Psoas muscle (tissue), 8 donors: ENCODE measurements at regions of chr12 and their contacts with region 1.

Region 1: DNA sequence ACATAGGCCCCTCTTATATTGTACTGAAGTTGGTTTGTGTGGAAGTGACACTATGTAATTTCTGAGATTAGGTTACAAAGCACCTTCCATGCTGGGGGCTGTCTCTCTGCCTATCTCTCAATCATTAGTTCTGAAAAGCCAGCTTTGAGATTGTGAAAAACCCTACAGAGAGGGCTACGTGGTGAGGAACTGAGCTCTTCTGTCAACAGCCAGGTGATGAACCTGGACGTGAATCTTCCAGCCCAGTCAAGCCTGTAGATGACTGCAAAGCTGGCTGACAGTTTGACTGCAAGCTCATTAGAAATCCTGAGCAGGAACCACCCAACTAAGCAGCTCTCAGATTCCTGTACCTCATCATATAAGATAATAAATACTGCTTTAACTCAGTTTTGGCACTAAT is 36.3 kb upstream of the BBS10 start:
- DNase-seq: no peak
- ATAC-seq: peak in 3 of 4 donors; percentile 51 to 63 (median 59)
- H3K4me3 ChIP-seq: no peak overlapping the region
- H3K27ac ChIP-seq: peak overlapping the region; percentile 43
- H3K4me1 ChIP-seq: peaks cover 11% of the 10 kb centered on the region
- H3K27me3 ChIP-seq: no peaks in the 10 kb centered on the region
- CTCF ChIP-seq: no peak

Region 2: DNA sequence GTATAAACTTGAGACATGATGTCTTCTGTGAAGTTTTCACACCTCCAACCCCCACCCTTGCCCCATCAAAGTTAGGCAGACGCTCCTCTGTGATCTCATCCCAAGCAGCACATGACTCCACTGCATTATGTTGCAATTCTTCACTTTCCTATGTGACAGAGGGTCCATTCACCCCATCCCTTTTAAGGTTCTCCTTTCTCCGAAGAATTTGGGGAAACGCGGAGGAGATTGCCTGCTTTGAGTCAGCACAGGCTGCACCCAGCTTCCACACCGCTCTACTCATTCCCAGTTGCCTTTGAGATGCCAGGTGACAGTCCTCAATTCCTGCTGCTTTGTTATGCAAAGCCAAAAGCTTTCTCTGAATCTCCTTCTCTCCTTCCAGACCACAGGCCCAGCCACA is 414.8 kb before region 1 on chr12:
- intact Hi-C with region 1: no loop called
- DNase-seq: no peak
- ATAC-seq: peak in 1 of 4 donors; percentile 37
- H3K4me3 ChIP-seq: no peak overlapping the region
- H3K27ac ChIP-seq: no peak overlapping the region
- H3K4me1 ChIP-seq: no peaks in the 10 kb centered on the region
- H3K27me3 ChIP-seq: no peaks in the 10 kb centered on the region
- CTCF ChIP-seq: no peak

Region 3: DNA sequence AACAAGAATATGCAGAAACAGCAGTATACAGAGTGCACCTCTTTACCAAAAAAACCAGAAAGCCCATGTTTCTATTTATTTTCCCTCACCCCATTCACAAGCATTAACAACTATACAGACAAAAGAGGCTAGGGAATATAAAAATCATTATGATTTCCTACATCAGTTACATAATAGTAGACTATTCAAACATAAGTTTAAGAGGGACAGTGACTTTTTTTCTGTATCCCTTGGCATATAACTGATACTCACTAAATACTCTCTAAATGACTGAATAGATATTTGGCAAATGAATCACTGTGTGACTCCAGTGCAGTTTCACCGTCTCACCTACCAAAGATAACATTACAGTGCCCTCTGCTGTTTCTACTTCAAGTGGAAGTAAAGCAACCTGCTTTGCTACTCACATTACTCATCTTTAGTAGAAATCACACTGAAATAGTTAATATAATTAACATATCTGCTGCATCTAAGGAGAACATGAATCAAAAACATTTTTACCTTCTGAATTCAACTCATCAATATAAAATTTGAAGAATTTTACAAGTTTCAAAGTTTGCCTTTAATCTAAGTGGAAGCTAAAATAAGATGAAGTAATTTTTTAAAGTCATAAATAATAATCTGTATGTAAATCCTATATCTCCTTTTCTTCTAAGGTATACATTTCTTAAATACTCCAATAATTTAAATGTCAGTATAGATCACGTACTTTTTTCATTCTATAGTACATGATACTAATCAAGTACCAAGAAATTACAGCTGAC is 71.2 kb after region 1 on chr12:
- intact Hi-C with region 1: no loop called
- DNase-seq: no peak
- ATAC-seq: peak; percentile 77 to 94 (median 90)
- H3K4me3 ChIP-seq: no peak overlapping the region
- H3K27ac ChIP-seq: peak overlapping the region; percentile 0
- H3K4me1 ChIP-seq: peaks cover 17% of the 10 kb centered on the region
- H3K27me3 ChIP-seq: no peaks in the 10 kb centered on the region
- CTCF ChIP-seq: peak; percentile 63

Region 4: GRCh38 chr12:76586764-76587395 is 202.3 kb after region 1 on chr12:
- intact Hi-C with region 1: loop called in 1 of 2 experiments (anchors 10 kb)
- DNase-seq: no peak
- ATAC-seq: no peak
- H3K4me3 ChIP-seq: no peak overlapping the region
- H3K27ac ChIP-seq: peak overlapping the region; percentile 91
- H3K4me1 ChIP-seq: peaks cover 29% of the 10 kb centered on the region
- H3K27me3 ChIP-seq: no peaks in the 10 kb centered on the region
- CTCF ChIP-seq: peak; percentile 69

Region 5: DNA sequence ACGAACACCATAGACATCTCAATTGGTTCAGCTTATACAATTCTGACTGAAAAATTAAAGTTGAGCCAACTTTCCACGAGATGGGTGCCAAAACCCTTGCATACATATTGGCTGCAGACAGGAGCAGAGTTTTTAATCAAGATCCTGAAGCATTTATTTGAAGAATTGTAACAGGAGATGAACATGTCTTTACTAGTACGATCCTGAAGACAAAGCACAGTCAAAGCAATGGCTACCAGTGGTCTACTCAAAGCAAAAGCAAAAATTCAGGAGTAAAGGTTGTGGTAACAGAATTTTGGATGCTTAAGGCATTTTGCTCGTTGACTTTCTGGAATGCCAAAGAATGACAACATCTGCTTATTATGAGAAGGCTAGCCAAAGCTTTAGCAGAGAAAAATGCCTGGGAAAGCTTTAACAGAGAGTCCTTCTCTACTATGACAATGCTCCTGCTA is 400.1 kb after region 1 on chr12:
- intact Hi-C with region 1: no loop called
- DNase-seq: no peak
- ATAC-seq: no peak
- H3K4me3 ChIP-seq: no peak overlapping the region
- H3K27ac ChIP-seq: peak overlapping the region; percentile 10
- H3K4me1 ChIP-seq: peaks cover 46% of the 10 kb centered on the region
- H3K27me3 ChIP-seq: no peaks in the 10 kb centered on the region
- CTCF ChIP-seq: no peak